Activated naive CD4-positive, alpha-beta T cell treated with anti-CD3 and anti-CD28 coated beads for 36 hours (primary cell): ENCODE measurements at regions of chr20 and their contacts with region 1.

Region 1: GRCh38 chr20:62793912-62794724 is 2.2 kb upstream of the MRGBP start:
- DNase-seq: peak; percentile 97
- H3K4me3 Mint-ChIP-seq: peak overlapping the region; percentile 81
- H3K27ac Mint-ChIP-seq: peak overlapping the region; percentile 84
- H3K4me1 Mint-ChIP-seq: peaks cover 25% of the 10 kb centered on the region
- H3K27me3 Mint-ChIP-seq: no peaks in the 10 kb centered on the region

Region 2: GRCh38 chr20:62302341-62303058 is 491.6 kb before region 1 on chr20 and contains the start of gene ADRM1:
- CTCF ChIA-PET with region 1: no interaction called
- intact Hi-C with region 1: loop called (anchors 1 kb)
- DNase-seq: peak; percentile 96
- H3K4me3 Mint-ChIP-seq: peak within 1 kb of the TSS; percentile 91
- H3K27ac Mint-ChIP-seq: peak within 1 kb of the TSS; percentile 99
- H3K4me1 Mint-ChIP-seq: peaks cover 24% of the 10 kb centered on the region
- H3K27me3 Mint-ChIP-seq: no peaks in the 10 kb centered on the region
- total RNA-seq, gene ADRM1: 77.4 to 81.5 TPM

Region 3: GRCh38 chr20:62616728-62617621 is 177.1 kb before region 1 on chr20:
- CTCF ChIA-PET with region 1: interaction called, 10 read pairs
- intact Hi-C with region 1: loop called (anchors 1 kb)
- DNase-seq: peak; percentile 85
- H3K4me3 Mint-ChIP-seq: peak overlapping the region; percentile 52
- H3K27ac Mint-ChIP-seq: peak overlapping the region; percentile 84
- H3K4me1 Mint-ChIP-seq: peaks cover 27% of the 10 kb centered on the region
- H3K27me3 Mint-ChIP-seq: no peaks in the 10 kb centered on the region

Region 4: DNA sequence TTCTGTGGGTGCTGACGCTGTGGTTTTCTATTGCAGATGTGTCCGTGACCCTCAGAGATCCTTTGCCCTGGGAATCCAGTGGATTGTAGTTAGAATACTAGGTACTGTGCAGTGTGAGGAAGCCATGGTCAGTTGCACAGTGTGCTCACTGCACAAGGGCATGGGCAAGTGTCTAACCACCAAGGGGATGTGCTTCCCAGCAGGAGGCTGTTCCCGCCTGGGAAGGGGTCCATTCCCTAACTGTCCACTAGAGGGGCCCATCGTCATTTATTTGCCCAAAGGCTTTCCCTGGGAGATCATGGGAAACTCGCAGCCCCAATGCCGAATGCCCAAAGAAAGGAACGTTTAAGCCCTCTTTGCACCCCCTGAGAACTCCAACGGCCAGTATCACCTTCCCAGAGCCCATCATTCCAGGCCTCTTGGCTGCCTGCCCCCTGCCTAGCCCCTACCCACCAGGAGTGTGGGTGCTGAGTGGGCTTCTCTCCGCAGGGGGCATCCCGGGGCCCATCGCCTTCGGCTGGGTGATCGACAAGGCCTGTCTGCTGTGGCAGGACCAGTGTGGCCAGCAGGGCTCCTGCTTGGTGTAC is 125.6 kb before region 1 on chr20:
- CTCF ChIA-PET with region 1: interaction called, 4 read pairs
- intact Hi-C with region 1: loop called (anchors 1 kb)
- DNase-seq: peak; percentile 43
- H3K4me3 Mint-ChIP-seq: no peak overlapping the region
- H3K27ac Mint-ChIP-seq: no peak overlapping the region
- H3K4me1 Mint-ChIP-seq: no peaks in the 10 kb centered on the region
- H3K27me3 Mint-ChIP-seq: no peaks in the 10 kb centered on the region

Region 5: DNA sequence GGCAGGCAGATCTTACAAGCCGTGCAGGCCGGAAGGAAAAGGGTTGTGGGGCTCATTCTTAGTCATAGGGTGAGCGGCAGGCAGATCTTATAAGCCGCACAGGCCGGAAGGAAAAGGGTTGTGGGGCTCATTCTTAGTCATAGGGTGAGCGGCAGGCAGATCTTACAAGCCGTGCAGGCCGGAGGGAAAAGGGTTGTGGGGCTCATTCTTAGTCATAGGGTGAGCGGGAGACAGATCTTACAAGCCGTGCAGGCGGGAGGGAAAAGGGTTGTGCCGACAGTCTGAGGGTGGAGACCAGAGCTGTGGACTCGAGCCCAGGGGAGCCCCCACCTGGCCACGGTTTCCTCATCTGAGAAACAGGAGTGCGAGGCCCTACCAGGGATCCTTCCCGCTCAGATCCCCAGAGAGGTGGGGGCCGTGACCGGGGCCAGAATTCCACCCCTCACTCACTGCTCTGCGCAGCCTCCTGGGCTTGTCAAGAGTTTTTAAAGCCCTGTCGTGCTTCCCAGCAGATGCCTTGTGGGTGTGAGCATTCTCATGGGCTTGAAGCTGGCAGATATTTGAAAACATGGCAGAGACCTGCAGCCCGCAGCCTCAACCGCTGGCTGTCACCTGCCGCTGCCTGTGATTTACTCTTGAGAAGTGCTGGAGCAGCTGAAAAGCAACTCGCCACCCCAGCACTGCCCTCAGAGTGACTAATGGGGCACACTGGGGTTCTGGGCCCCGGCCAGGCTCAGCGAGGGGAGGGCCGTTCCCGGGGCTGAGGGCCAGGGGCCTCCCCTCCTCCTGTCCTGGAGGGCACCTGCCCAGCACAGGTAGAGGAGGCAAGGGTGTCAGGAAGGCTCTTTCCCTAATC is 53.6 kb before region 1 on chr20:
- CTCF ChIA-PET with region 1: interaction called, 6 read pairs
- intact Hi-C with region 1: loop called (anchors 1 kb)
- DNase-seq: peak; percentile 86
- H3K4me3 Mint-ChIP-seq: peak overlapping the region; percentile 38
- H3K27ac Mint-ChIP-seq: peak overlapping the region; percentile 47
- H3K4me1 Mint-ChIP-seq: peaks cover 28% of the 10 kb centered on the region
- H3K27me3 Mint-ChIP-seq: no peaks in the 10 kb centered on the region

Region 6: DNA sequence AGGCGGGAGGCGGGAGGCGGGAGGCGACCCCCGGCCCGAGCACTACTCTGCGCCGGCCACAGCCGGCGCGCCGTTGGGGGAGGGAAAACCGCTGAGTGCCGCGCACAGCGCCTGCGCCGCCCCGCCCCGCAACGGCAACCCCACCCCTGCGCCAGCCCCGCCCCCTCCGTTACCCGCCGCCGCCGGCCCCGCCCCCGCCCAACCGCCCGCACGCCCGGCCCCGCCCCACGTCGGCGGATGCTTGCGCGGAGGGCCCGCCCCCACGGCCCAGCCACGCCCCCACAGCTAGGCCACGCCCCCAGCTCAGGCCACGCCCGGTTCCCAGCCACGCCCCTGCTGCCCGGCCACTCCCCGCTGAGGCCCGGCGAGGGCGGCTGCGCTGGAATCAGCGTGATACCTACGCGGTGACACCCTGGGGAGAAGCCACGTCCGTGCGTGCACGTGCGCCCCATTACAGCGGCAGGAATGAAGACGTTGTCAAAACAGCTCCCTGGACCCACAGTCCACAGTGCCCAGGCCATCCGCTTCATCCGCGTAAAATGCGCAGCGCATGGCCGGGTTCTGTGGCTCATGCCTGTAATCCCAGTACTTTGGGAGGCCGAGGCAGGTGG is 67.7 kb after region 1 on chr20 and contains the start of gene TCFL5:
- CTCF ChIA-PET with region 1: no interaction called
- intact Hi-C with region 1: loop called (anchors 1 kb)
- DNase-seq: peak; percentile 92
- H3K4me3 Mint-ChIP-seq: peak within 1 kb of the TSS; percentile 65
- H3K27ac Mint-ChIP-seq: no peak within 1 kb of the TSS
- H3K4me1 Mint-ChIP-seq: peaks cover 24% of the 10 kb centered on the region
- H3K27me3 Mint-ChIP-seq: no peaks in the 10 kb centered on the region
- total RNA-seq, gene TCFL5: 5.4 to 5.5 TPM